Mammary epithelial cell (primary cell): ENCODE measurements at regions of chr1 and their contacts with region 1.

Region 1: GRCh38 chr1:240027059-240027462 is 64.6 kb upstream of the FMN2 start:
- DNase-seq: peak; percentile 14
- H3K4me3 ChIP-seq: no peak overlapping the region
- H3K27ac ChIP-seq: no peak overlapping the region
- H3K4me1 ChIP-seq: no peaks in the 10 kb centered on the region
- H3K27me3 ChIP-seq: no peaks in the 10 kb centered on the region
- CTCF ChIP-seq: peak; percentile 63 to 68

Region 2: DNA sequence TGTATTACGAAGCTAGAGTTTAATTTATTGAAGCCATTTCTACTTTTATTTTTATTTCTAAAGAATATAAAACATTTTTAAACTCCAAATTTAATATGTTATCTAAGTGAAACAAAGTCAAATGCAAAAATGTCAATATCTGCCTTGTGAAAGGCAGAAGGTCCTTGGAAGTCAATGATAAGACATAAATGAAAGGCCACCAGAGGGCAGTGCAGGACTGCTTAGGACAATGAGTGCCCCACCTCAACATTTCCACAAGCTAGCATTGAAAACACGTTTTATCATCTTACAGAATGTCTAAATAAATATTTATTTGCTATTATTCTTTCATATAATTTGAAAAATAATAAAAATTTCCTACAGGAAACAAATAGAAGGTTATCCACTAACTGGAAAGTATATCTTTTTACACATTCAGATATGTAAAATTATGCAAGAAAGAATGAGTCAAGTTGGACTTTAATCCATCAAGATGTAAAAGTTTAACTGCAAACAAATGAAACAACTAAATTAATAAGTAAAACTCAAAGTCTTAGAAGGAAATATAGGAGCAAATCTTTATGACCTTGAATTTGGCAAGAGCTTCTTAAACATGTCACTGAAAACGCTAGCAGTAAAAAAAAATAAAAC is 75.4 kb before region 1 on chr1:
- CTCF ChIA-PET with region 1: no interaction called
- dilution Hi-C with region 1: no loop called
- in situ Hi-C with region 1: no loop called
- intact Hi-C with region 1: no loop called
- DNase-seq: peak; percentile 19
- H3K4me3 ChIP-seq: no peak overlapping the region
- H3K27ac ChIP-seq: no peak overlapping the region
- H3K4me1 ChIP-seq: no peaks in the 10 kb centered on the region
- H3K27me3 ChIP-seq: no peaks in the 10 kb centered on the region
- CTCF ChIP-seq: peak; percentile 64 to 66

Region 3: DNA sequence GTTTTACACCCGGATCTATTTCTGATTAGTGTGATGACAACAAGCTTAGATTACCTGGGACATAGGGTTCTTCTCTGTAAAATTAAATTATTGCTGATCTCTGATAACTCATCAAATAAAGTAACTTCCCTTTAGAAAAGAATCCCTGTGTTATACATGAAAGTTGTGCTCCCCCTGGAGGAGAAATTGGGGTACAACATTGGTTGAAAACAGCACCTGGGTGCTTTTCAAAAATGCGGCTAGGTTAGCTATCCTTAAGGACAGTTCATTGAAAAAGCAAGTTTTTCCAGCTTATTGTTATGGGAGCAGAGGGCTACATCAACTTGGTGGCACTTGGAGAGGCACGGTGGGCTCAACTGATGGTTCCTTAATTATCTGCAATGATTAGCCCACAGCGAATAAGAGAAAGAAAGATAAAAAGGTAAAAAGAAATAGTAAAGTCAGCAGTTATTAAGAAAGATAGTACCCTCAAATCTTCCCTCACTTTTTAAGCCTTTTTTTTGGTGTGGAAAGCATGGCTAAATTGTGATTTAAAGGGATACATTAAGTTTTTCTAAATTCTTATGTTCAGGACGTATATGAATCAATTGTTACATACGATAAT is 162.4 kb after region 1 on chr1:
- CTCF ChIA-PET with region 1: no interaction called
- dilution Hi-C with region 1: no loop called
- in situ Hi-C with region 1: no loop called
- intact Hi-C with region 1: loop called (anchors 1 kb)
- DNase-seq: peak; percentile 25
- H3K4me3 ChIP-seq: no peak overlapping the region
- H3K27ac ChIP-seq: no peak overlapping the region
- H3K4me1 ChIP-seq: no peaks in the 10 kb centered on the region
- H3K27me3 ChIP-seq: no peaks in the 10 kb centered on the region
- CTCF ChIP-seq: peak; percentile 66 to 70

Region 4: DNA sequence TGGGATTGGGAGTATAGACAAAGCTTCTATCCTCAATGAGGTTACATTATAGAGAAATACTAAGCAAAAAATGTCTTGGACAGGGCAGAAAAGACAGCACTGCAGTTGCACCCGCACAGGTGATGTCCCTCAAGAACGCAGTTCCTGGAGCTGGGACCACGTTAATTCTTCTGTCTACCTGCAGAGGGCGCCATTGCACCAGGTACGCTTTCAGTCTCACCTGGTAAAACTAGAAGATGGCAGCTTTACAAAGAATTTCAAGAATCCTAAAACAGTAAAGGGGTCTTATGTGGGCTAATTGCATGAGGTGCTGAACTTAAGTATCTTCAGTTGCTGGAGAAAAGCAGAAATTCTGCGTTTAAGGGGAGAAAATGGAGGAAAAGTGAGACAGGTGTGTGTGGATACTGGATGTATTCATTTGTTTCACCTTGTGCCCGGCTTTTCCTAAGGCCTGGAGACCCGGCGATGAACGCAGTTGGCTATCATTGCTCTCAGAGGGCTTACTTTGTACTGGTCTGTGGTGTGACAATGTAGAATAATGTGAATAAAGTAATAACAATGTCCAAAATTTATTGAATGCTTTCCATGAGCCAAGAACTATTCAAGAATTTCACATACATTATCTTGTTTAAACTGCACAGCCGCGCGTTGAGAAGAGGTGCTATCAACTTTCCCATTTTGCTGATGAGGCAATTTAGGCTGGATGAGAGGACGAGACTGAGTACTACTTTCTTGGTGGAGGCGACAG is 861.2 kb after region 1 on chr1:
- CTCF ChIA-PET with region 1: no interaction called
- dilution Hi-C with region 1: no loop called
- in situ Hi-C with region 1: no loop called
- intact Hi-C with region 1: loop called (anchors 10 kb)
- DNase-seq: peak; percentile 4
- H3K4me3 ChIP-seq: no peak overlapping the region
- H3K27ac ChIP-seq: no peak overlapping the region
- H3K4me1 ChIP-seq: no peaks in the 10 kb centered on the region
- H3K27me3 ChIP-seq: no peaks in the 10 kb centered on the region
- CTCF ChIP-seq: peak; percentile 40 to 64